Heart left ventricle (tissue), 16 donors: ENCODE measurements at regions of chr1 and their contacts with region 1.

Region 1: GRCh38 chr1:16351994-16352841 is at the start of gene FBXO42:
- DNase-seq: peak; percentile 92 to 96 (median 93)
- ATAC-seq: peak; percentile 90 to 98 (median 97)
- H3K4me3 ChIP-seq: peak within 1 kb of the TSS; percentile 70 to 99 (median 88)
- H3K27ac ChIP-seq: peak within 1 kb of the TSS; percentile 87 to 97 (median 94)
- H3K4me1 ChIP-seq: peaks cover 5 to 36% (median 26%) of the 10 kb centered on the region in 12 donors
- H3K27me3 ChIP-seq: no peaks in the 10 kb centered on the region
- CTCF ChIP-seq: peak in 11 of 12 donors; percentile 23 to 78 (median 54)
- POLR2A ChIP-seq: peak in 1 of 2 donors; percentile 96
- total RNA-seq, gene FBXO42: 15.4 to 44.4 (median 22.9) TPM

Region 2: GRCh38 chr1:16206547-16207317 is 145.5 kb before region 1 on chr1:
- intact Hi-C with region 1: loop called in 3 of 10 experiments (anchors 5 to 10 kb)
- DNase-seq: peak; percentile 97 to 99 (median 98)
- ATAC-seq: peak; percentile 93 to 97 (median 96)
- H3K4me3 ChIP-seq: peak overlapping the region; percentile 30 to 67 (median 63)
- H3K27ac ChIP-seq: peak overlapping the region; percentile 64 to 98 (median 93)
- H3K4me1 ChIP-seq: peaks cover 0 to 23% (median 13%) of the 10 kb centered on the region in 12 donors
- H3K27me3 ChIP-seq: no peaks in the 10 kb centered on the region
- CTCF ChIP-seq: no peak
- POLR2A ChIP-seq: peak in 1 of 2 donors; percentile 64

Region 3: GRCh38 chr1:16217061-16217785 is 135.0 kb before region 1 on chr1:
- intact Hi-C with region 1: loop called in 1 of 10 experiments (anchors 10 kb)
- DNase-seq: peak; percentile 99 to 100 (median 99)
- ATAC-seq: peak; percentile 97 to 99 (median 98)
- H3K4me3 ChIP-seq: peak overlapping the region; percentile 40 to 77 (median 56)
- H3K27ac ChIP-seq: peak overlapping the region in 10 of 12 donors; percentile 49 to 79 (median 61)
- H3K4me1 ChIP-seq: peaks cover 0 to 25% (median 13%) of the 10 kb centered on the region in 12 donors
- H3K27me3 ChIP-seq: no peaks in the 10 kb centered on the region
- CTCF ChIP-seq: no peak
- POLR2A ChIP-seq: peak in 1 of 2 donors; percentile 38

Region 4: GRCh38 chr1:16243936-16244649 is 108.1 kb before region 1 on chr1:
- intact Hi-C with region 1: loop called in 7 of 10 experiments (anchors 2 to 10 kb)
- DNase-seq: peak; percentile 64 to 80 (median 74)
- ATAC-seq: peak in 3 of 4 donors; percentile 34 to 43 (median 37)
- H3K4me3 ChIP-seq: no peak overlapping the region
- H3K27ac ChIP-seq: peak overlapping the region in 4 of 12 donors; percentile 17 to 48 (median 26)
- H3K4me1 ChIP-seq: peaks cover 5 to 39% (median 26%) of the 10 kb centered on the region in 12 donors
- H3K27me3 ChIP-seq: no peaks in the 10 kb centered on the region
- CTCF ChIP-seq: peak; percentile 74 to 86 (median 80)
- POLR2A ChIP-seq: no peak

Region 5: GRCh38 chr1:16266411-16267118 is 85.7 kb before region 1 on chr1:
- intact Hi-C with region 1: loop called in 2 of 10 experiments (anchors 5 kb)
- DNase-seq: no peak
- ATAC-seq: peak; percentile 72 to 91 (median 81)
- H3K4me3 ChIP-seq: no peak overlapping the region
- H3K27ac ChIP-seq: peak overlapping the region in 10 of 12 donors; percentile 4 to 74 (median 49)
- H3K4me1 ChIP-seq: peaks cover 0 to 63% (median 28%) of the 10 kb centered on the region in 12 donors
- H3K27me3 ChIP-seq: no peaks in the 10 kb centered on the region
- CTCF ChIP-seq: no peak
- POLR2A ChIP-seq: no peak

Region 6: DNA sequence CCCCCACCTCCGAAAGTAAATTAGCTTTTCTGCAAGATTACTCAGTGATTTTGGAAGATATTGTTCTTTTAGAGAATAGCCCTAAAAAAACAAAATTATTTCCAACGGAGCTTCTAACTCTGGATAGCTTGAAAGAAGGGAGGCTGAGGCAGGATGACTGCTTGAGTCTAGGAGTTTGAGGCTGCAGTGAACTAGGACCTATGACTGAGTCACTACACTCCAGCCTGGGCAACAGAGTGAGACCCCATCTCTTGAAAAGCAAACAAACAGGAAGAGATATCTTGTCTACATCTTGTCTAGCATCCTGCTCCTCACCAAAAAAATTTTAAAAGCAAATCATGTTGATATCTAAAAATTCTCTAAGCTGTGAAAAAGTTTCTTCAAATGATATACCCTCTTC is 73.0 kb before region 1 on chr1:
- intact Hi-C with region 1: no loop called
- DNase-seq: no peak
- ATAC-seq: no peak
- H3K4me3 ChIP-seq: no peak overlapping the region
- H3K27ac ChIP-seq: no peak overlapping the region
- H3K4me1 ChIP-seq: peaks cover 0 to 24% (median 5%) of the 10 kb centered on the region in 12 donors
- H3K27me3 ChIP-seq: no peaks in the 10 kb centered on the region
- CTCF ChIP-seq: no peak
- POLR2A ChIP-seq: no peak

Region 7: DNA sequence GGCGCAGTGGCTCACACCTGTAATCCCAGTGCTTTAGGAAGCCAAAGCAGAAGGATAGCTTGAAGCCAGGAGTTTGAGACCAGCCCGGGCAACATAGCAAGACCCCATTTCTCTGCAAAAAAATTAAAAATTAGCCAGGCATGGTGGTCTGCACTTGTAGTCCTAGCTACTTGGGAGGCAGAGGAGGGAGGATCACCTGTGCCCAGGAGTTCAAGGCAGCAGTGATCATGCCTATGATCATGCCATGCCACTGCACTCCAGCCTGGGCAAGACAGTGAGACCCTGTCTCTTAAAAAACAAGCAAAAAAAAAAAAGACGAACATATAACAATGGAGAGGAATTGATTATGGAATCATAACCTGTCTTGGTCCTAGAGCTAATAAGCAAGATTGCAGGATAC is 45.0 kb before region 1 on chr1:
- intact Hi-C with region 1: no loop called
- DNase-seq: no peak
- ATAC-seq: no peak
- H3K4me3 ChIP-seq: no peak overlapping the region
- H3K27ac ChIP-seq: no peak overlapping the region
- H3K4me1 ChIP-seq: no peaks in the 10 kb centered on the region
- H3K27me3 ChIP-seq: no peaks in the 10 kb centered on the region
- CTCF ChIP-seq: no peak
- POLR2A ChIP-seq: no peak

Region 8: DNA sequence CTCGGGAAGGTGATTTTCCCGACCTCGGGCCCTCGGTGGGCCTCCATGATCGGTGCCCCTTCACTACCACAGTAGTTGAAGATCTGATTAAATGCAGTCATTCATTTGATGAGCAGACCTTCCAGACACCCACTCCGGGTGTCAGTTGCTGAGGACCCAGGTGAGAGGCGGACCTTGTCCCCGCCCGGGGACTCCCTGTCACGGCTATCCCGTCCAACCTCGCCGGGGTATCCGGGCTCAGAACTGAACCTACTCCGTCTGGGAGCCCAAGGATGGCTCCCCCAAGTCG is 291.9 kb after region 1 on chr1:
- intact Hi-C with region 1: no loop called
- DNase-seq: no peak
- ATAC-seq: peak in 2 of 4 donors; percentile 25 to 38
- H3K4me3 ChIP-seq: peak overlapping the region; percentile 46 to 95 (median 72)
- H3K27ac ChIP-seq: peak overlapping the region; percentile 33 to 92 (median 80)
- H3K4me1 ChIP-seq: peaks cover 6 to 45% (median 30%) of the 10 kb centered on the region in 12 donors
- H3K27me3 ChIP-seq: peaks cover 0 to 12% (median 0%) of the 10 kb centered on the region in 9 donors
- CTCF ChIP-seq: no peak
- POLR2A ChIP-seq: no peak